ENCODE measurements at regions of chr5 and their contacts with region 1.

Region 1: GRCh38 chr5:127313847-127314473 is 23.4 kb downstream of the MEGF10 start:
- DNase-seq: peak; percentile 80
- ATAC-seq: peak; percentile 80
- H3K4me3 Mint-ChIP-seq: no peak overlapping the region
- H3K27ac Mint-ChIP-seq: no peak overlapping the region
- H3K4me1 Mint-ChIP-seq: peaks cover 2% of the 10 kb centered on the region
- H3K27me3 Mint-ChIP-seq: peaks cover 4% of the 10 kb centered on the region
- CTCF ChIP-seq: peak; percentile 71

Region 2: DNA sequence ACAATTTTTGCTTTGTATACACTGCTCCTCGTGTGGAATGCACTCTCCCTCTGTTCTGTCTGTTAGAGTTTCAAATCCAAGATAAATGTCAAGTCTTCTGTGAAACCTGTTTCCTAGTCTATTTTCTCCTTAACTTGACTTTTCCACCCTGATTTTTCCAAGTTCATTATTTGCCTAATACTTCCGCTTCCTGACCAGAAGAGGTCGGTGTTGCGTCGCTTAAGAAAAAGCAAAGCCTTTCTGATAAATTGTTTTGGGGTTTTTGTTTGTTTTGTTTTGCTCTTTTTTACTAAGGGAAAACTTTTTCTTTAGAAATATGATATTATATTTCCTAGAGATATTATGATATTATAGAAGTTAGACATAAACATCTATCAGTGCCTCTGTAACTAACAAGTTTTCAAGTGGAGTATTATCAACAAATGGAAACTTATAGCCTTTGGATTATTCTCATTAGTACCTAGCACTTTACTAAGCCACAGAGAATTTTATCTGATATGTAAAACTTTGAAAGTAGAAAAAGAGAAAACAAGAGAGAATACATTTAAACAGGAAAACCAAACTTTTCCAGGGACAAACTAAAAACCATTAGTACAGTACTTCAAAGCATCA is 657.5 kb before region 1 on chr5:
- CTCF ChIA-PET with region 1: interaction called, 3 read pairs
- POLR2A ChIA-PET with region 1: no interaction called
- intact Hi-C with region 1: loop called (anchors 2 kb)
- DNase-seq: peak; percentile 41
- ATAC-seq: no peak
- H3K4me3 Mint-ChIP-seq: no peak overlapping the region
- H3K27ac Mint-ChIP-seq: no peak overlapping the region
- H3K4me1 Mint-ChIP-seq: no peaks in the 10 kb centered on the region
- H3K27me3 Mint-ChIP-seq: no peaks in the 10 kb centered on the region
- CTCF ChIP-seq: peak; percentile 85

Region 3: GRCh38 chr5:127324756-127325155 is 10.8 kb after region 1 on chr5:
- CTCF ChIA-PET with region 1: interaction called, 13 read pairs
- POLR2A ChIA-PET with region 1: no interaction called
- intact Hi-C with region 1: no loop called
- DNase-seq: no peak
- ATAC-seq: no peak
- H3K4me3 Mint-ChIP-seq: no peak overlapping the region
- H3K27ac Mint-ChIP-seq: no peak overlapping the region
- H3K4me1 Mint-ChIP-seq: peaks cover 19% of the 10 kb centered on the region
- H3K27me3 Mint-ChIP-seq: peaks cover 2% of the 10 kb centered on the region
- CTCF ChIP-seq: no peak

Region 4: GRCh38 chr5:127423173-127423798 is 109.3 kb after region 1 on chr5:
- CTCF ChIA-PET with region 1: no interaction called
- POLR2A ChIA-PET with region 1: no interaction called
- intact Hi-C with region 1: no loop called
- DNase-seq: no peak
- ATAC-seq: no peak
- H3K4me3 Mint-ChIP-seq: peak overlapping the region; percentile 13
- H3K27ac Mint-ChIP-seq: no peak overlapping the region
- H3K4me1 Mint-ChIP-seq: no peaks in the 10 kb centered on the region
- H3K27me3 Mint-ChIP-seq: peaks cover 6% of the 10 kb centered on the region
- CTCF ChIP-seq: no peak